ENCODE measurements at regions of chr6 and their contacts with region 1.

Region 1: DNA sequence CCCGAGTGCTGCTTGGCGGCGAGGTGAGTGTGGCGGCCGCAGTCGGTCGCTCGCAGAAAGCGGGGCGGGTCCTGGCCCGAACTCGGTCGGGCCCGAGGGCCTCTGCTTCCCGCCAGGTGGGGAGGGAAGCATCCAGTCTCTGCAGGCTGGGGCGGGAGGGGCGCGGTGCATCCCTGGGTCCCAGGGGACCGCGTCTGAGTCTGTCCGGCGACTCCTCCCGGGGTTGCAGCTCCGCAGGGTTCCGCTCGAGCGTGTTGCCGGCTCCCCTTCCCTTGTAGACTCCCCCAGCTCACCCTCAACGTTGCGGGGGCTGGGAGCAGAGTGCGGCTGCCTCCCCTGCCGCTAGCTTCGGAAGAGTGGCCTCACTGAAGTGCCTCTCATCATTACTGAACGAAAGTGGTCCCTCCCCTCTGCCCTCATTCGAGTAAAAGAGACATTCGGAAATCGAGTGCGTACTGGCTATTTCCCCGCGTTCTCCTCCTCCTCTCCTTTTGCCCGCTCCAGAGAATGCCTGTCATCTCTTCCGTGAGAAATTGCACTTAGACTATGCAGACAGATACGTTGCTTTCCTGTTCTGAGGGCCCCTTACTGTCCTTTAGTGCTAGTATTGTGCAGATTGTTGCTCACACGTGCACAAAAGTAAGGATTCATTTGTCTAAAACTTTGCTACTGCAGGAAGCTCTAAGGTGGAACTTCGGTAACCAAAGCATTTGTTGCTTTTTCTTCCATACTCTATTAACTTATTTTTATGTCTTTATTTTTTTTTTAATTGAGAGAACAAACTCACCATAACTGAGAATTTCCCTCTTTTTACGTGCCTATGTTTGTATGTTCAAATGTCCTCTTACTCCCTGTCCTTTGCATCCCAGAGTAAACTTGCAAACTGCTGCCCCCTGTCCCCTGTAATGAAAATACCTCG is 751 bp downstream of the MAP3K4 start:
- DNase-seq: peak; percentile 78
- H3K4me3 Mint-ChIP-seq: peak overlapping the region; percentile 91
- H3K27ac Mint-ChIP-seq: peak overlapping the region; percentile 87
- H3K4me1 Mint-ChIP-seq: peaks cover 9% of the 10 kb centered on the region
- H3K27me3 Mint-ChIP-seq: no peaks in the 10 kb centered on the region
- CTCF ChIP-seq: peak; percentile 40

Region 2: DNA sequence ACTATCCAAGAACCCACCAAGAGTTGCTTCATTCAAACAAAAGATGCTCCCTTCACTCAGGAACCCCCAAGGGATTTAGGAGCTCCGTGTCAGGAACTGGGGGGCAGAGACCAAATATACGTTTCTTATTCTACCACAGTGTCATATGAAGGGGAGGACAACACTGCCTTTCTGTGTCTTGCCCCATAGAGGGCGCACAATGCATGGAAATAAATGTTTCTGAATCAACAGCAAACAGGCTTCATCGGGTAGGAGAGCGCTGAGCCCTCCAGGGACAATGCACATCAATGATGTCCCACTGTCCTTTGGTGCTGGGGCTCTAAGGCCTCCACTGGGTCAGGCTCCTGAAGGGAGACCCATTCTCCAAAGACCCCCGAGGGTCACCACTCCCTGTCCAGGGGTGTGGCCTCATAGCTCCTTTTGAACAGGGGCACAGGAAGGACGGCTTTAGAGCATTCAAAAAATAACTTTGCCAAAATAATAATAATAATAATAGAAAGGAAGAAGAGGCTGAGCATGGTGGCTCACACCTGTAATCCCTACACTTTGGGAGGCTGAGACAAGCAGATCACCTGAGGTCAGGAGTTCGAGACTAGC is 259.2 kb before region 1 on chr6:
- CTCF ChIA-PET with region 1: interaction called, 8 read pairs
- POLR2A ChIA-PET with region 1: no interaction called
- intact Hi-C with region 1: loop called (anchors 1 kb)
- DNase-seq: peak; percentile 60
- H3K4me3 Mint-ChIP-seq: no peak overlapping the region
- H3K27ac Mint-ChIP-seq: no peak overlapping the region
- H3K4me1 Mint-ChIP-seq: peaks cover 6% of the 10 kb centered on the region
- H3K27me3 Mint-ChIP-seq: no peaks in the 10 kb centered on the region
- CTCF ChIP-seq: peak; percentile 85

Region 3: GRCh38 chr6:160750276-160750689 is 242.0 kb before region 1 on chr6:
- CTCF ChIA-PET with region 1: interaction called, 10 read pairs
- POLR2A ChIA-PET with region 1: interaction called, 8 read pairs
- intact Hi-C with region 1: loop called (anchors 5 kb)
- DNase-seq: peak; percentile 45
- H3K4me3 Mint-ChIP-seq: no peak overlapping the region
- H3K27ac Mint-ChIP-seq: no peak overlapping the region
- H3K4me1 Mint-ChIP-seq: no peaks in the 10 kb centered on the region
- H3K27me3 Mint-ChIP-seq: no peaks in the 10 kb centered on the region
- CTCF ChIP-seq: peak; percentile 70

Region 4: DNA sequence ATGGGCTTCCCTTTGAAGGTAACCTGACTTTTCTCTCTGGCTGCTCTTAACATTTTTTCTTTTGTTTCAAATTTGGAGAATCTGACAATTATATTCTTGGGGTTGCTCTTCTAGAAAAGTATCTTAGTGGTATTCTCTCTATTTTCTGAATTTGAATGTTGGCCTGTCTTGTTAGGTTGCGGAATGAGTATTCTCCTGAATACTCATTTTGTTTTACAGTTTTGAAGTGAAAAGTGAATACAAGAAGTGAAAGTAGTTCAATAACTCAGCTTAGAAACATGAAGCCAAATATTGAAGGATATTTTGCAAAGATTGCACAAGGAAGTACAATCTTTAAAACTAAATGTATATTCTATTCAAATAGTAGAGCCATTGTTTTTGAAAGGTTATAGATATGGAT is 121.0 kb before region 1 on chr6:
- CTCF ChIA-PET with region 1: no interaction called
- POLR2A ChIA-PET with region 1: no interaction called
- intact Hi-C with region 1: no loop called
- DNase-seq: no peak
- H3K4me3 Mint-ChIP-seq: no peak overlapping the region
- H3K27ac Mint-ChIP-seq: no peak overlapping the region
- H3K4me1 Mint-ChIP-seq: no peaks in the 10 kb centered on the region
- H3K27me3 Mint-ChIP-seq: no peaks in the 10 kb centered on the region
- CTCF ChIP-seq: no peak

Region 5: GRCh38 chr6:160950507-160950906 is 41.8 kb before region 1 on chr6:
- CTCF ChIA-PET with region 1: interaction called, 13 read pairs
- POLR2A ChIA-PET with region 1: interaction called, 45 read pairs
- intact Hi-C with region 1: loop called (anchors 1 kb)
- DNase-seq: peak; percentile 76
- H3K4me3 Mint-ChIP-seq: peak overlapping the region; percentile 40
- H3K27ac Mint-ChIP-seq: peak overlapping the region; percentile 88
- H3K4me1 Mint-ChIP-seq: peaks cover 27% of the 10 kb centered on the region
- H3K27me3 Mint-ChIP-seq: peaks cover under 1% of the 10 kb centered on the region
- CTCF ChIP-seq: no peak

Region 6: DNA sequence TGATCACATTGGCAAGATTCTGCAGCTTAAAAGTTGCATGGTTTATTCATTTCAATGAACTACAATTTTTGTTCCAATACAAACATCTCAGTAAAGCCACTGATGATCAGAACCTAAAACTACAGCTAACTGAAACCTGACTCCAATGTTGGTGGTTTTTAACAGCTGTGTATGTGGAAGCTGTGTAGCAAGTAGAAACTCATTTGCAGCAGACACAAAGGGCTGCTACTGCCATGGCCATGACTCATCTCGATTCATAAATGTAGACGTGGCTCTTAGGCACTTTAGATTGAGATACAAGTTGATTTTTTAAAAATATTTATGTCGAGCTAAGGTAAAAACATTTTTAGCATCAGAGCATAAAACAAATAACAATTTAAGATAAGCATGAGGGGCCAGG is 20.2 kb before region 1 on chr6:
- CTCF ChIA-PET with region 1: interaction called, 5 read pairs
- POLR2A ChIA-PET with region 1: interaction called, 34 read pairs
- intact Hi-C with region 1: no loop called
- DNase-seq: peak; percentile 75
- H3K4me3 Mint-ChIP-seq: no peak overlapping the region
- H3K27ac Mint-ChIP-seq: no peak overlapping the region
- H3K4me1 Mint-ChIP-seq: peaks cover 17% of the 10 kb centered on the region
- H3K27me3 Mint-ChIP-seq: no peaks in the 10 kb centered on the region
- CTCF ChIP-seq: no peak

Region 7: DNA sequence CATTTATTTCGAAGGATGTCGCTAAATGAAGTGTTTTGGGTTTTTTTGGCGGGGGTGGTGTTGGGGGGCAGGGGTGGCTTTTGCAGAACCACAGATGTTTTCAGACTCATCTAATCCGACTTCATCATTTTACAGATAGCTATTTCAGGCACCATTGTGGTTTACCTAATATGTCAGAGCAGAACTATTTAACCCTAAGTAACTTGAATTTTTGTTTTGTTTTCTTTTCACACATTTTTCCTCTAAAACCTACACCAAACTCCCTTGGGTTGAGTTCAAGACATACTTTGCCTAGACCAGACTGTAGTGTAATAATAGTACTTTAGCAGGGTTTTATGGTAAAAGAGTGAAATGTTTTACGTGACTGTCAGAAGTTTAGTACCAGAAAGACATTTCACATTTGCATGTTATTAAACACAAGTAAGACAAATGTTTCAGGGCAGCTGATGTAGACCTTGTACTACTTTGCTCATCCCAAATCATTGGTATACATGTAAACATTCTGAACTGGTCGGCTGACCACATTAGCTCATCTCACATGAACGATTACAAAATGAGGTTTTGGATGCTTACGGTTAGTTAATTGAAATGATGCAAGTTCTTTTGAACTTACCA is 37.0 kb after region 1 on chr6:
- CTCF ChIA-PET with region 1: interaction called, 7 read pairs
- POLR2A ChIA-PET with region 1: interaction called, 22 read pairs
- intact Hi-C with region 1: loop called (anchors 5 kb)
- DNase-seq: peak; percentile 32
- H3K4me3 Mint-ChIP-seq: no peak overlapping the region
- H3K27ac Mint-ChIP-seq: peak overlapping the region; percentile 7
- H3K4me1 Mint-ChIP-seq: peaks cover 37% of the 10 kb centered on the region
- H3K27me3 Mint-ChIP-seq: no peaks in the 10 kb centered on the region
- CTCF ChIP-seq: no peak

Region 8: DNA sequence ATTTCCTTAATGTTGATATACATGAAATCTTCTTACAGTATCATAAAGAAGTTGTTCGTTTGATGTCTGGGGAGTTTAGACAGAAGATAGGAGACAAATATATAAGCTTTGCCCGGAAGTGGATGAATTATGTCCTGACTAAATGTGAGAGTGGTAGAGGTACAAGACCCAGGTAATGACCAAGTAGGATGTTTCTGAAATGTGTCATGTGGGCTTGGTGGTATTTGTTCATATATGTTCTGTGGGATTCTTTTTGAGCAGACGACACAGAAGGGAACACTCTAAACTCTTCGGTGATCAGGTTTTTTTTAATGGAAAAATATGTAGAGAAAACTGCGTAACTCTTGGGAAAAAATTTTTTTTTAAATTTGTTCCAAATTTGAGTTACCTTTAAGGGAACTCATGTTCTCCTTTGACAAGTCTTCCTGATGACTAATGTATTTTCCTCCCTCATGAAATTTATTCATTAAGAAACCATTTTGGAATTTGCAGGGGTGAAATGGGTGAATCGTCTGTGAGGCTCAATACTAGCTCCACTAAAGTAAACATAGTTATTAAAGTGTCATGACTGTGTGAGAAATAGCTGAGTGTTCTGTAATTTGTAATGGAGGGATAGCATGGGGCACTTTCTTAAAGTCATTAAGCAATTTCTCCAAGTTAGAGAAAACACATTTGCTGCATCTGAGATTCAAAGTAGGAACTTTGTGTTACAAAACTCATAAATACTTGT is 99.8 kb after region 1 on chr6:
- CTCF ChIA-PET with region 1: interaction called, 4 read pairs
- POLR2A ChIA-PET with region 1: interaction called, 3 read pairs
- intact Hi-C with region 1: loop called (anchors 5 kb)
- DNase-seq: peak; percentile 41
- H3K4me3 Mint-ChIP-seq: peak overlapping the region; percentile 21
- H3K27ac Mint-ChIP-seq: peak overlapping the region; percentile 81
- H3K4me1 Mint-ChIP-seq: peaks cover 22% of the 10 kb centered on the region
- H3K27me3 Mint-ChIP-seq: no peaks in the 10 kb centered on the region
- CTCF ChIP-seq: no peak

Region 9: DNA sequence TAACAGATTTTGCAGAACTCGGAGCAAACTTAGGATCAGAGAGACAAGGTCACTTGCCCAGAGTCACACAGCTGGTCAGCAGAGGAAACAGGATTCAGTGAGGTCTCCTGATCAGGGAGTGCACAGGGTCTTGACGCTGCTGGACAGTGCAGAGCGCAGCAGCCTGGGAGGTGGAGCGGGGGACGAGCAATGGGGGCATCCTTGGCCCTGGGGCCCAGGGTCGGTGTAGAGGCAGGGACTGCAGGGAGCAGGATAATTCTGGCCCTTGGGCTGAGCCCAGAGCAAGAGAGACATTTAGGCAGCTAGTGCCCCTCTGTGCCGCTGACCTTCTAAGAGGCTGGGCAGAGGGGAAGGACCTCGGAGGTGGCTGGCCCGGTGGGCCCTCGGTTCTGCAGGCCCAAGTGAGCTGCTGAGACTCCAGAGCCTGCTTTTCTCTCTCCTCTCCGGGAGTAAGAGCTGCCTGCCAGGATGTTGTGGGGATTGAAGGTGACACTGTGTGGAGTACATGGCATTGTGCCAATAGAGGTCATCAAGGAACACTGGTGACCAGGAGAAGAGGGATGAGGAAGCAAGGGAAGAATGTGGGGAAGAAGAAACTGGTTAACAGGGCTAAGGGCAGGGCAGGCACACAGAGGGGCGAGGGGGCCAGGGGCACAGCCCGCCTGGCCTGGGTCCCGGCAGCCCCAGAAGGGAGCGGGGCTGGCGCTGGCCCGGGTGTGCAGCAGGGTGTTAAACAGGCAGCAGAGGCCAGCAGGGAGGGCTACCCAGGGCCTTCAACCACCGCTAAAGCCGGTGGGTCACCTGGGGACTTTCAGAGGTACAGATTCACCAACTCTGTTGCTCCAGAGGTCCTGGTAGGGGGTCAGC is 159.6 kb after region 1 on chr6:
- CTCF ChIA-PET with region 1: no interaction called
- POLR2A ChIA-PET with region 1: no interaction called
- intact Hi-C with region 1: no loop called
- DNase-seq: no peak
- H3K4me3 Mint-ChIP-seq: no peak overlapping the region
- H3K27ac Mint-ChIP-seq: no peak overlapping the region
- H3K4me1 Mint-ChIP-seq: no peaks in the 10 kb centered on the region
- H3K27me3 Mint-ChIP-seq: no peaks in the 10 kb centered on the region
- CTCF ChIP-seq: no peak